Activated CD8-positive, alpha-beta T cell treated with anti-CD3 and anti-CD28 coated beads, Interleukin-2, amount 10 ng/mL, durations not matched to agents 7 days and 5 days (primary cell): ENCODE measurements at regions of chr18 and their contacts with region 1.

Region 1: DNA sequence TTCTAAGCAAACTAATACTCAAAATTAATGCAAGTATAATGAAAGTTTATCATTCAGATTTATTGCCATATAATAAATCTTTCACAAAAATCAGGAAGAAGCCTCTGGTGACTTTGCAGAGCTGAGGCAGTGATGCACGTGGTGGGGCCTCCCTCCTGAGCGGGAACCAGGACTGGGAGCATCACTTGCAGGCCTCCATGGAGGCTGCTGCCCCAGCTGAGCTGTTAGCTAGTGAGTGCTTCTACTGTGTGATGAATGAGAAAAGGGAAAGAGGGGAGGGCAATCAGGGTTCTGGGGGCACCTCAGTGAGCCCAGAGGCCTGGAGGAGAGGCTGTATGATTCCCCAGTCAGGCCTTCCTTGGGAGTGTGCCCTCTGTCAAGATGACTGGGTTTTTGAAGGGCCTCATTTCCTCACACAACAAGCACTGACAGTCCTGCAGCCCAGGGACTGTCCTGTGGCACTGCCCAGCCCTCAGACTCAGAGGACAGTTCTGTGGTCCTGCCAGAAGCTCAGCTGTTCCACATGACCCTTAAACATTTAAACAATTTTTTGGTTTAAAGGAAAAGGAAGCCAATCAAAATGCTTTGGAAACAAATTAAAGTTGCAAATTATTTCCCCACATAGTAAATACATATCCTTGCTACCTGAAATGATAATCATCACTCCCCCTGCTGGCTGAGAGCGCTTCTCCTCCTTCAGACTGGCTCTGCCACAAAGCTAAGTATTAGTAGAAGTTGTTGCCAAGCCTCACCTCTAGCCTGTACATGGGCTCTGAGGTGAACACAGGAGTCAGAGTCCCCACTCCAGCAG is 90.9 kb upstream of the SMAD7 start:
- DNase-seq: peak; percentile 71
- ATAC-seq: no peak
- H3K4me3 Mint-ChIP-seq: no peak overlapping the region
- H3K27ac Mint-ChIP-seq: no peak overlapping the region
- H3K4me1 Mint-ChIP-seq: peaks cover 12% of the 10 kb centered on the region
- H3K27me3 Mint-ChIP-seq: no peaks in the 10 kb centered on the region

Region 2: DNA sequence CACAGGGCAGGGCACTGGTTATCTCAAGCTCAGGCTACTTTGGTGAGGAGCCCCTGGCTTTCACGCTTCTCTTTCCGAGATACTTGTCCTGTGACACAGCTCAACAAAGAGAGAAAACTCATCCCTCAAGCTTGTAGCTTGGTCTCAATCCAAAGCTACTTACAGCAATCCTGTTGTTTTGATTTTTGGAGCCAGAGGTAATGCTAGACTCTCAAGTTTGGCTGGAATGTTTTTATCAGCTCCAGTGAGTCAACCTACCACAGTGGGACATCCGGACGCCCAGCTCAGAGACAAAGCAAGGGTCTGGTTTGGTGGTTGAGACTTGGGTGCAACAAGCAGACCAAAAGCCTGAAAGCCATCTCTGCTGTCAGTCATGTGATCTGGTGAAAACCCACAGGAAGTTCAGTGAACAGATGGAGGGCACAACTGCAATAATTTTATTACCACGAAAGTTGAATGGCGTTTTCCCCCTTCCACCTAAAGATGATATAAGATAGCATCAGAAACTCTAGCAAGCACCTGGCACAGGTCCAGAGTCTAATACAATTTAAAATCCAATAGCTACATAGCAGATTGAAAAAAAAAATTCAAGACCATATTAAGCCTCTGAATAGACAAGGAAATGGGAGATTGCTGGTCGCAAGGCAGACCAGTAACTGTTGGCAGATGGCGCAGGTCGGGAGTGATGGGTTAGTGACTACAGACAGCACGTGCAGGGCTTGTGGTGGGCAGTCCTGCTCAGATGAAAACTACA is 11.4 kb after region 1 on chr18:
- CTCF ChIA-PET with region 1: interaction called, 28 read pairs
- POLR2A ChIA-PET with region 1: no interaction called
- DNase-seq: peak; percentile 74
- ATAC-seq: peak; percentile 81
- H3K4me3 Mint-ChIP-seq: peak overlapping the region; percentile 37
- H3K27ac Mint-ChIP-seq: peak overlapping the region; percentile 64
- H3K4me1 Mint-ChIP-seq: peaks cover 62% of the 10 kb centered on the region
- H3K27me3 Mint-ChIP-seq: no peaks in the 10 kb centered on the region